ENCODE measurements at regions of chr2 and their contacts with region 1.

Region 1: DNA sequence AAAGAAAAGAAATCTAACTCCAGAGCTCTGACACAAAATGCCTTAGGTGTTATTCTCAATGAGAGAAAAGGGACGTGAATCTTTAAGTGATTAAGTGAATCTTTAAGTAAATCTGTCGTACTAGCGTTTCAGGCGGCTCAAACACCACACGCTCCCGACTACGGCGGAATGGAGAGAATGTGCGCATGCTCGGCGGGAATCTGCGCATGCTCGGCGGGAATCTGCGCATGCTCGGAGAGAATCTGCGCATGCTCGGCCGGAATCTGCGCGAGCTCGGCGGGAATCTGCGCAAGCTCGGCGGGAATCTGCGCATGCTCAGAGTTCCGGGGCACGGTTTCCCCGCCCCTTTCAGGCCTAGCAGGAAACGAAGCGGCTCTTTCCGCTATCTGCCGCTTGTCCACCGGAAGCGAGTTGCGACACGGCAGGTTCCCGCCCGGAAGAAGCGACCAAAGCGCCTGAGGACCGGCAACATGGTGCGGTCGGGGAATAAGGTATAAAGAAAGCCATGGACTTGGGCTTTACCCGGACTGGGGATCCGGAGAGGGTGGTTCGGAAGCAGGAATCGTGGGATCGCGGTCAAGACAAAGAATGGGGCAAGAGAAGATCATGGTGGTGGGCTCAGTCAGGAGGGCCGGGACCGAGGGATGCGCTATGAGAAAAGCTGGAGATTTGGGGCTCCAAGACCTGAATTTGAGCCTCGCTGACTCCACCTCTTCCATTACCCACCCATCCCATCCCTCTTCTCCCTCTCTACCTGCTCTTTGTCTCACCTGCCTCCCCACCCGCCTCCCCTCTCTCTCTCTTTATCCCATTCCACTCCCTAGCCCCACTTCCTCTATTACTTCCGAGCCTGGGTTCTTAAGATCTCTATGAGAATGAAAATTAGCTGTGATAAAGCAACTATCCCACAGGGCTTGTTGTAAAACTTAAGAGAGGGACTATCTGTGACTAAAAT is at the start of gene XRCC5:
- DNase-seq: peak; percentile 95
- H3K4me3 Mint-ChIP-seq: peak within 1 kb of the TSS; percentile 96
- H3K27ac Mint-ChIP-seq: peak within 1 kb of the TSS; percentile 96
- H3K4me1 Mint-ChIP-seq: peaks cover 51% of the 10 kb centered on the region
- H3K27me3 Mint-ChIP-seq: no peaks in the 10 kb centered on the region
- total RNA-seq, gene XRCC5: 452 and 492 TPM in 2 replicates

Region 2: DNA sequence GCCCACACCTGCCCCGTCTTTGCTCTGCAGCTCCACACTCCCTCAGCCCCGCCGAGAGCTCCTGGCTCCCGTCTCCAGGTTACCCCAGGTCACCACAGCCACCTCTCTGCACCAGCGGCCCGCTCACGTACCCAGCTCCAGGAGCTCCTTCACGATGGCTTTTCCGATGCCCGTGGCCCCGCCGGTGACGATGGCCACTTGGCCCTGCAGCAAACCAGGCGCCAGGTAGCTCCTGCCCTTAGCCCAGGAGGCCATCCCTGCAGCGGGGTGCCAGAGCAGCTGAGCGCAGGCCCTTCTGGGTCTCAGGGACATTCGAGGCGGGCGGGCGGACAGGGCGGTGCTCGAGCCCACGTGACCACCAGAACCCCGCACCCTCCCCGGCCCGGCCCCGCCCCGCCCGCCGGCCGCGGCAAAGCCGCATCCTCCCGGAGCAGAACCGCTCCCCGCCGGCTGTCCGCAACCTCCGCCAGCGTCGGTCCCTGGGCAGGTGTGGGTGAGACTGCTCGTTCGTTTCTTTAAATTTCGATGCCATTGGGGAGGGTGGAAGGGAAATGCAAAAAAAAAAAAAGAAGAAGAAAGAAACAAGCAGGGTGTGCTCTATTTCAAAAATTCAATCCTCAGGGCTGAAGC is 27.6 kb before region 1 on chr2 and contains the starts of genes PECR and TMEM169:
- intact Hi-C with region 1: loop called (anchors 1 kb)
- DNase-seq: peak; percentile 73
- H3K4me3 Mint-ChIP-seq: peak within 1 kb of the TSS; percentile 92
- H3K27ac Mint-ChIP-seq: peak within 1 kb of the TSS; percentile 81
- H3K4me1 Mint-ChIP-seq: peaks cover 46% of the 10 kb centered on the region
- H3K27me3 Mint-ChIP-seq: no peaks in the 10 kb centered on the region
- total RNA-seq, gene PECR: 11.5 and 15.2 TPM in 2 replicates
- total RNA-seq, gene TMEM169: 1.3 and 1.6 TPM in 2 replicates

Region 3: GRCh38 chr2:216119986-216120385 is 10.7 kb after region 1 on chr2:
- intact Hi-C with region 1: no loop called
- DNase-seq: no peak
- H3K4me3 Mint-ChIP-seq: peak overlapping the region; percentile 55
- H3K27ac Mint-ChIP-seq: peak overlapping the region; percentile 97
- H3K4me1 Mint-ChIP-seq: peaks cover 55% of the 10 kb centered on the region
- H3K27me3 Mint-ChIP-seq: no peaks in the 10 kb centered on the region

Region 4: DNA sequence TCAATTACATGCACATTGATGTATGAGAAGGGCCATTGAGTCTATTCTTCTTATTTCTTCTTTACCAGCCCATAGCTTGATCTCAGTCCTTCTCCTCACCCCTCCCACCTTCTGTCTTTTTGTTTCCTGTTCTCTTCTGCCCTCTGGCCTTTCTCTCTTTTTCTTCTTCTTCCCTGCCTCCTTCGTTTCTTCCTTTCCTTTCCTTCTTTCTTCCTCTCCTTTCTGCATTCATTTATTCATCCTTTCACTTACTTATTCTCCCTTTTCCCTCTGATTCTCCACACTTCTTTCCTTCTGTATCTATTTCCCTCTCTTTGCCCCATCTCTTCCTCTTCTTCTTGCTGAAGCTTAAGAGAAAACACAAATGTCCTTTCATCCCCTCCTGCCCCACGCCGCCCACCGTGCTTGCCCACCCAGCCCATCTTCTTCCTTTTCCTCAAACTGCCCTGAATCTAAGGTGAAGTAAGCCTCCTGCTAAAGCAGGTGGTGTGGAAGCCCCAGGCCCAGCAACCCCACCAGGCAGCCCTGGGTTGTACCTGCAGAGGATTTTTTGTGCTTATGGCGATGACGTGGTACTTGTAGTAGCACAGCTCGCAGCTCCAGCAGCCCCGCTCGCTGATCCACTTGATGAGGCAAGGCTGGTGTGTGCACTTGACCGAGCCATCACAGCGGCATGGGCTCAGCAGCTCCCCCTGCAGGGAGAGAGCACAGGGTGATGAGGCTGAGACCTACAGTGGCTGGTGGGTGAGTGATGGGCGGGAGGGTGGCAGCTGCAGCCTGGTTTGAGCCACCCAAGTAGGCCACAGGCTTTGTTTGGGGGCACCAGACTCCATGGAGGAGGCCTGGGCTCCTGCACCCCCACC is 174.0 kb after region 1 on chr2:
- intact Hi-C with region 1: loop called (anchors 1 kb)
- DNase-seq: no peak
- H3K4me3 Mint-ChIP-seq: no peak overlapping the region
- H3K27ac Mint-ChIP-seq: no peak overlapping the region
- H3K4me1 Mint-ChIP-seq: no peaks in the 10 kb centered on the region
- H3K27me3 Mint-ChIP-seq: no peaks in the 10 kb centered on the region

Region 5: GRCh38 chr2:216339156-216339807 is 230.0 kb after region 1 on chr2:
- intact Hi-C with region 1: no loop called
- DNase-seq: no peak
- H3K4me3 Mint-ChIP-seq: no peak overlapping the region
- H3K27ac Mint-ChIP-seq: no peak overlapping the region
- H3K4me1 Mint-ChIP-seq: peaks cover 4% of the 10 kb centered on the region
- H3K27me3 Mint-ChIP-seq: peaks cover 25% of the 10 kb centered on the region

Region 6: DNA sequence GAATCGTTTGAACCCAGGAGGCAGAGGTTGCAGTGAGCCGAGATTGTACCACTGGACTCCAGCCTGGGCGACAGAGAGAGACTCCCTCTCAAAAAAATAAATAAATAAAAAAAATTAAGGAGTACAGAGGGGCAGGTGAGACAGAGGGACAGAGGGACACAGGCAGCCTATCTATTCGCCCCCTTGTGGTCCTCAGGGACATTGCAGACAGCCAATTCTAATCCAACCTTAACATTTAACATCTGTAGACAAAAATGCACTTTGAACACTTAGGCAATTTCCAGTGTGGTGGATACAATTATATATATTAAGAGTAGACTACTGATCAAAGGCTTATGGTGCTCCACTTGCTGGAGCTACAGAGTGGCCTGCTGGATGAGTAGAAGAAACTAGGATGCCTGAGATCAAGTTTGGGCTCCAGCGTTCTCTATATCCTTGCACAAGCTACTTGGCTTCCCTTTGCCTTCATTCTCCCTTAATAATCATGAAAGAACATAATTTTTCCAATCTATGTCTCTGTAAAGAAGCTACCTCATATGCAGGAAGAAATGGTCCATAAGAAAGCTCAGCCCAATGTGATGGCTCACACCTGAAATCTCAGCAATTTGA is 294.9 kb after region 1 on chr2:
- intact Hi-C with region 1: loop called (anchors 1 kb)
- DNase-seq: peak; percentile 12
- H3K4me3 Mint-ChIP-seq: no peak overlapping the region
- H3K27ac Mint-ChIP-seq: no peak overlapping the region
- H3K4me1 Mint-ChIP-seq: no peaks in the 10 kb centered on the region
- H3K27me3 Mint-ChIP-seq: peaks cover 35% of the 10 kb centered on the region

Region 7: DNA sequence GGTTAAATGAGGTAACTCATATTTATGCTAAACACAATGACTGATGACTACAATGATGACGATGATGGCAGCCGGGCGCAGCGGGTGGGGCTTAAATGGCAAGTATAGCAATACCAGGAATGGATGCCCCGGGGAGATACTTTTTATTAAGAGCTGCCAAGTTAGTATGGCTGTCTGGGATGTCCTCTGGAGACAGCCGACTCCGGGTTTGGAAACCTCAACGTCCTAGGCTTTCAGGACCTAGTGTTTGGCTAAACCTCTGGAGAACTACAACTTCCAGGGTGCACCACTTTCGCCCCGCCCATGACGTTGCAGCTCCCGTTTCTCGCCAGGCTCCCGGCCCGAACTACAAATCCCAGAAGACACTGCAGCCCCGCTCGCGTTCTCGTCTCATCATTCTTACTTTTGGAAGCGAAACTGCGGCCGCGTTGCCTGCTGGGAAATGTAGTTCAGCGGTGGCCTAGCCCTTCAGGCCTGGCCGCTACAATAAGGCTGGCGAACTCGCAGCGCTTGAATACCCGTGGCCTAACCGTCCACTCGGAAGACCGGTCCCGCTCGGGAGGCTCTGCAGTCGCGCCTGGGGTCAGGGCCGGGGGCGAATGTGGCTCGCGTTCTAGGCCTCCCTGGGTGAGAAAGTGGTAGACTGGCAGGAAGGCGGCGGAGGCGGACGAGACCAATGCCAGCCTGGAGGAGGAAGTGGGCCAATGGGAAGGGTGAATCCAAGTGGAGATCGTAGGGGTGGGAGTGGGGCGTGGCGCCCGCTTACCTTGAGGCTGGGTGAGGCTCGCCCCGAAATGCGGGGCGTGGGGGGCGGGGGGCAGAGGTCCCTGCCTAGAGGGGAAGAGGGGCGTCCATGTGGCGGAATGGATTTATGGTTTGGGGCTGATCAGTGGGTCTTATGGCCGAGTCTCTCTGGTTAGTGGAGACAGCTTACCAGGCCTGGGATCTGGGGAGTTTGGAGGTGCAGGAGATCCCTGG is 303.1 kb after region 1 on chr2 and contains the start of gene SMARCAL1:
- intact Hi-C with region 1: loop called (anchors 2 kb)
- DNase-seq: peak; percentile 97
- H3K4me3 Mint-ChIP-seq: peak within 1 kb of the TSS; percentile 98
- H3K27ac Mint-ChIP-seq: peak within 1 kb of the TSS; percentile 94
- H3K4me1 Mint-ChIP-seq: peaks cover 19% of the 10 kb centered on the region
- H3K27me3 Mint-ChIP-seq: peaks cover 13% of the 10 kb centered on the region
- total RNA-seq, gene SMARCAL1: 32.8 and 34.1 TPM in 2 replicates

Measured in activated T-helper 2 cell treated with anti-CD3 and anti-CD28 coated beads, Interferon-gamma antibody, Interleukin-2, Interleukin-4, amounts not matched to agents 10 μg/mL and 5 μg/mL and 100 μg/mL, durations not matched to agents 14 hours and 24 hours and 36 hours (primary cell).